Adrenal gland (tissue), 19 donors: ENCODE measurements at regions of chr6 and their contacts with region 1.

Region 1: DNA sequence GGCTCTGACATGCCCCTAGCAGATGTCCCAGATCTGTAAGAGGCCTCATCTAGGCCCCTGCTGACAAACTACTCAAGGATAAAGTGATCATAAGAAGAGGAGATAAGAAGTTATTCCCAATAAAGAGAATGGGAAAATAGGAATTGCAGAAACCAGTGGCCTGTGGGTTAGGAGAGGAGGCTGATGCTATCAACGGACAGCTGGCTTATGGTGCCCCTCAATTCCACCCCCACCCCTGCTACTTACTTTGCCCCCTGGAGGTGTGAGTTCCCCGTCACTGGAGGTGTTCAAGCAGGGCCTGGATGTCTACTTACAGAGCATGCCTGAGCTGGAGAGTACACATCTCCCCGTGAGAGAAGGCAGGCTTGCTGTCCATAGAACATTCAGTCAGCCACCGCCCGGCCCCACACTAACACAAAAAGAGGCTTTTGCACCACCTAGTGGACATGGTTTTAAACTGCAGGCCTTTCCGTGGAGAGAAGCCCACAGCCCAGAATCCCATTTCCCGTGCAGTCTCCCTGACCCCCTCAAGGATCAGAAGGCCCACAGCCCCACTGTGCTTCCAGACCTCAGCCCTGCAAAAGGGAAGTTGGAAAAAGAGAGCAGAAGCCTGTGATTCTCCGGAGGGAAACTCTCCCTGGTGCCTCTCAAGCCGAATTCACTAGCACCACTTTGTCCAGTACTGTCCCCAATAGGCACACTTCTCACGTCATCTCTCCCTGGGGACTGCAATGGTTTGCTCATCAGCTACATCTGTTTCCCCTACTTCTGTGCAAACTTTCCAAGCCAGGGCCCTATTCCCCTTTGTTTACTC is 23.8 kb upstream of the BNIP5 start:
- DNase-seq: peak; percentile 73 to 93 (median 86)
- H3K4me3 ChIP-seq: no peak overlapping the region
- H3K27ac ChIP-seq: no peak overlapping the region
- H3K4me1 ChIP-seq: peaks cover 0 to 8% of the 10 kb centered on the region in 2 donors
- H3K27me3 ChIP-seq: no peaks in the 10 kb centered on the region
- CTCF ChIP-seq: peak; percentile 79 to 91 (median 86)
- POLR2A ChIP-seq: no peak

Region 2: DNA sequence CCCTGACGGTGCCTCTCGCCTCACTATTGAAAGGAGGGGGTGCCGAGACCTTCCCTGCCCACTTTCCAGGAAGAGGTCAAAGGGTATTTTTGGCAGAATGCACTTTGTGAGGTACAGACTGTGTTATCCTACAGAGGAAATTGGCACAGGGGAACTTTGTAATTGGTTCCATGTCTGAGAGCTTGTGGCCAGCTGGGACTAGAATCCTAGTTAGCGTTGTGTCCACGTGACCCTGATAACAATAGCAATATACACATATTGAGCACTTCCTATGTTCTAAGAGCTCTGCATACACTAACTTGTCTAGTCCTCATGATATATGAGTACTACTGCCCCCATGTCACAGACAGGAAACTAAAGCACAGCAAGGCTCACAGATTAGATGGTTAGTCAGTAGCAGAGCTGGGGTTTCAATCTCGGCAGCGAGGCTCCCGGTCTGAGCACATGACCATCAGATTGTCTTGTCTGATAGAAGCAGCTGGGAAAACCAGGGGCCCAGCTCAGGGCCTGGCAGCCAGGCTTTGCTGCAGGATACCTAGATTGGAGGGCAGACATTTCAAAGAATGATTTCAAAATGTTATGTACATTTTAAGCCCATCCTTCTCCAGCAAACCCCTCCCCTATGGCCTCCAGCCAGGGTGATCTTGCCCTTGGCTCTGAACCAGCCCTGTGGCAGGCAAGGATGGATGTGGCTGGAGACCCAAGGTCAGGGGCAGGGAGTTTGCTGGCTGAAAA is 228.8 kb before region 1 on chr6:
- intact Hi-C with region 1: loop called in 1 of 2 experiments (anchors 10 kb)
- DNase-seq: peak; percentile 89 to 96 (median 93)
- H3K4me3 ChIP-seq: peak overlapping the region in 2 of 4 donors; percentile 20 to 55
- H3K27ac ChIP-seq: peak overlapping the region; percentile 74 to 97 (median 93)
- H3K4me1 ChIP-seq: peaks cover 50 to 77% of the 10 kb centered on the region in 2 donors
- H3K27me3 ChIP-seq: no peaks in the 10 kb centered on the region
- CTCF ChIP-seq: no peak
- POLR2A ChIP-seq: peak in 1 of 2 donors; percentile 74

Region 3: DNA sequence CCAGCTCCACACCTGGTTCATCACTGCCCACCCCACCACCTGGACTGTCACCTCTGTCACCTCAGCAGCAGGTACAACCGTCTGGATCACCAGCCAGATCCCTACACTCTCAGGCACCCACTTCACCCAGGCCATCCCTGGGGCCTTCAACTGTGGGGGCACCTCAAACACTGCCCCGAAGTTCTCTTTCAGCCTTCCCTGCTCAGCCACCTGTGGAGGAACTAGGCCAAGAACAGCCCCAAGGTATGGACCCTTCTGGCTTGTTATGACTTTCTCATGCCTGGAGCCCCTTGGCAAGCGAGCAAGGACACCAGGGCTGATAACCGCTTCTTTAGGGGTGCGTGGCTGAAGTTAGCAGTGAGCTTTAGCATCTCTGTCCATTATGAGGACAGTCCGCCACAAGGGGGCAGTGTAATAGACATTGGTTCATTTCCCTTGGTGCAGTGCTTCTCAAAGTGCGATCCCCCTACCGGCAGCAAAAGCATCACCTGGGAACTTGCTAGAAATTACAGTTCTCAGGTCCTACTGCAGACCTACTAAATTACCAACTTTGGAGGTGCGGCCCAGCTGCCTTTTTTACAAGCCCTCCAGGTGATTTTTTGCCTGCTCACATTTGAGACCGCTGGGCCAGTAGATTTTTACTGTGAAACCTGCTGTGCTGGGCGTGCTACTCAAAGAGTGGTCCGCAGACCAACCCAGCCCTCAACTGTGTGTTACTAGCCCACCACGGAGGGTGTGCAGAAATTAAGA is 58.0 kb before region 1 on chr6:
- intact Hi-C with region 1: loop called (anchors 5 to 10 kb)
- DNase-seq: peak; percentile 85 to 97 (median 90)
- H3K4me3 ChIP-seq: no peak overlapping the region
- H3K27ac ChIP-seq: no peak overlapping the region
- H3K4me1 ChIP-seq: peaks cover 0 to 7% of the 10 kb centered on the region in 2 donors
- H3K27me3 ChIP-seq: no peaks in the 10 kb centered on the region
- CTCF ChIP-seq: peak; percentile 89 to 94 (median 94)
- POLR2A ChIP-seq: no peak

Region 4: GRCh38 chr6:36339146-36339545 is 21.3 kb before region 1 on chr6:
- intact Hi-C with region 1: loop called in 1 of 2 experiments (anchors 2 kb)
- DNase-seq: no peak
- H3K4me3 ChIP-seq: no peak overlapping the region
- H3K27ac ChIP-seq: no peak overlapping the region
- H3K4me1 ChIP-seq: peaks cover 0 to 8% of the 10 kb centered on the region in 2 donors
- H3K27me3 ChIP-seq: peaks cover 7% of the 10 kb centered on the region
- CTCF ChIP-seq: no peak
- POLR2A ChIP-seq: no peak